Thyroid gland (tissue), 4 donors: ENCODE measurements at regions of chr17 and their contacts with region 1.

Region 1: GRCh38 chr17:49227436-49228261 is 2.9 kb downstream of the PHOSPHO1 start:
- DNase-seq: peak; percentile 82 to 89
- H3K4me3 ChIP-seq: no peak overlapping the region
- H3K27ac ChIP-seq: no peak overlapping the region
- H3K4me1 ChIP-seq: peaks cover 24 to 33% of the 10 kb centered on the region in 2 donors
- H3K27me3 ChIP-seq: peaks cover 15% of the 10 kb centered on the region
- CTCF ChIP-seq: peak; percentile 47 to 89 (median 76)
- POLR2A ChIP-seq: no peak

Region 2: DNA sequence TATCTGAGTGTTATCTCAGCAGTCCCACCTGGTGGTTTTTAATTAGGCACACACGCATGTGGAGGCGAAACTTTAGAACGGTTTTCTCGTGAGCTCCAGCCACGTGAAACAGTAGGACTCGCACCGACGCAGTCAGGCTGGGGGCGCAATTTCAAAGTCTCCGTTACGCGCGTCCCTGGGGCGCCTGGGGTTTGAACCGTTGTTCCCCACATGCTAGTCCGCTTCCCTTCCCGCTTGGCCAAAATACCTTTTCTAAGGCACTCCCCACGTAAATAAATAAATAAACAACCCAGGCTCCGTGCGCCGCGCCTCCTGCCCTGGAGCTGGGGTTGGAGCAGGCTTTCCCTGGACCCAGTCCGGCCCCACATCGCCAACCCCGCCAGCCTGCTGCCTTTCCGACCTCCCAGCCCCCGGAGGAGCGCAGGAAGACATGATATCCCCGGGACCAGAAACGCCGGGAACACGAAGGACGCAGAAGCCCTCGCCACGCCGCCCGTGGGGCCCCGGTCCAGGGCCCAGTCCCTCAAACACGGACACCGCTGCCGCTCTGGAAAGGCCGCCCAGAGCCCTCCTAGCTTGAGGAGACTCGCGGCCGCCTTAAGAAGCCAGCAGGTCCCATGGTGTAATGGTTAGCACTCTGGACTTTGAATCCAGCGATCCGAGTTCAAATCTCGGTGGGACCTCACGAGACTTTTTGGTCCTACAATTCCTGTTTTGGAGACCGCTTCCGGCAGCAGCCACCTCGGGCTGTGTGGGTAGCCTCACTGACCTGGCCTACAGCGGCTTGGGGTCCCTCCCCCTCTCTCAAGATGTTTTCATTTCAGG is 35.5 kb before region 1 on chr17:
- intact Hi-C with region 1: loop called (anchors 5 kb)
- DNase-seq: peak; percentile 93
- H3K4me3 ChIP-seq: peak overlapping the region in 2 of 3 donors; percentile 27 to 57
- H3K27ac ChIP-seq: peak overlapping the region; percentile 99 to 100 (median 99)
- H3K4me1 ChIP-seq: peaks cover 1 to 5% of the 10 kb centered on the region in 2 donors
- H3K27me3 ChIP-seq: no peaks in the 10 kb centered on the region
- CTCF ChIP-seq: peak in 3 of 6 experiments; percentile 19 to 41 (median 37)
- POLR2A ChIP-seq: peak in 1 of 2 donors; percentile 37

Region 3: DNA sequence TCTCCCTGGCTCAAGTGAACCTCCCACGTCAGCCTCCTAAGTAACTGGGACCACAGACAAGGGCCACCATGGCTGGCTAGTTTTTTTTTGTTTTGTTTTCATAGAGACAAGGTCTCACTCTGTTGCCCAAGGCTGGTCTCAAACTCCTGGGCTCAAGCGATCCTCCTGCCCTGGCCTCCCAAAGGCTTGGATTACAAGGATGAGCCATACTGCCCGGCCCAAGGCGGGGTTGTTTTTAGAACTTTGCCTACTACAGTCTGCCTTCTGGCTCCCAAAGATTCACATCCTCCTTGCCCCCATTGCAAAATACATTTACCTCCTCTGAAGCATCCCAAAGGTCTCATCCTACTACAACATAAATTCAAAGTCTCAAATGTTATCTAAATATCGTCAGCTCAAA is 52.4 kb after region 1 on chr17:
- intact Hi-C with region 1: loop called (anchors 10 kb)
- DNase-seq: no peak
- H3K4me3 ChIP-seq: no peak overlapping the region
- H3K27ac ChIP-seq: no peak overlapping the region
- H3K4me1 ChIP-seq: no peaks in the 10 kb centered on the region
- H3K27me3 ChIP-seq: no peaks in the 10 kb centered on the region
- CTCF ChIP-seq: no peak
- POLR2A ChIP-seq: no peak

Region 4: DNA sequence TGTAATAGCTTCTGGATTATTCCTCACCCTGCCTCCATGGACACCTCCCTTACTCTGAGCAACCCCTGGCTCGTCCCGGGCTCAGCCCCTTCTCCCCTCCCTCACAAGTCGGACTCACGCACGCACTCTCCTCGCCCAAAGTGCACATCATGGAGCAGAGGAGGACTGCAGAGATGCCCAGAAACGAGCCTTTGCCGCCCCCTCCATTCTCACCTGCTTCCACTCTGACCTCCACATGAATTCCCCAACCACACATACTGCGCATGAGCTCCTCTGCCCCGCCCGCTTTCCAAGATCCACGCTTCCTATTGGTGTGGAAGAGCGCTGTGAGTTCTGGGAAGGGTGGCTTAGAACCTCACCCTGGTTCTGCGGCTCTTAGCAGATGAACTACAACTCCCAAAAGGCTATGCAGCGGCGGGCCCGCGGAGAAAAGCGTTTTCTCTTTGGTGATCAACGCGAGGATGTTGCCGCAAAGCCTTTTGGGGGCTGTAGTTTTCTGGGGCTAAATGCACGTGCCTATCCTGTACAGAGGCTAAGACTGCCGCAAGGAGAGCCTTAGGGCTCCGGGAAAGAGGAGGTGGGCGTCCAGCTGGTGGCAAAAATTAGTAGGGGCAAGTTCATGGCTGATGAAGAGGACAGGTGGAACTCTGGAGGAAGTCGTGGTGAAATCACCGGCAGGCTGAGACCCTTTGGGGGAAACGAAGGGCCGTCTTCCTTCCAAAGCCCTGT is 187.1 kb after region 1 on chr17 and contains the start of gene PHB1:
- intact Hi-C with region 1: no loop called
- DNase-seq: peak; percentile 95 to 97
- H3K4me3 ChIP-seq: peak within 1 kb of the TSS; percentile 51 to 70 (median 61)
- H3K27ac ChIP-seq: no peak within 1 kb of the TSS
- H3K4me1 ChIP-seq: peaks cover 7 to 16% of the 10 kb centered on the region in 2 donors
- H3K27me3 ChIP-seq: no peaks in the 10 kb centered on the region
- CTCF ChIP-seq: no peak
- POLR2A ChIP-seq: peak in 1 of 2 donors; percentile 42
- total RNA-seq, gene PHB1: 77.5 to 129 (median 103) TPM